Activated CD4-positive, alpha-beta memory T cell treated with anti-CD3 and anti-CD28 coated beads for 36 hours (primary cell): ENCODE measurements at regions of chr2 and their contacts with region 1.

Region 1: DNA sequence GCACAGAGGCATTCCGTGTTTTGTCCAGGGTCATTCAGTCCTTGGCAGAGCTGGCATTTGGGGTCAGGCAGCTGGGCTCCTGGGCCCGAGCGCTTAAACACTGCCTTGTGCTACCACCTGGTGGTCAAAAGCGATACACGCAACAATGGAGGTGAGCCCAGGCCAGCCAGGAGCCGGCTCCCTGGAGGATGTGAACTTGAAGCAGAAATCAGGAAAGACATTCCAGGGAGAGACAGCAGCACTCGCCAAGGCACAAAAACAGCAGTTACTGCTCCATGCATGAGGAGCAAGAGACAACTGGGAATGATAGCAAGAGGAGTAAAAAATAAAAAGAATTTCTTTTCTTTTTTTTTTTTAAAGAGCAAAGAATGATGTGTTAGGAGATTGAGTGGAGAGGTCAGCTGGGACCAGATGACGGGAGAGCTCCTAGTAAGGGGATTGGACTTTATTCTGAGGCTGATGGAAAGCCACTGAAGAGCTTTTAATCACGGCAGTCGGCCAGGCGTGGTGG is 20.7 kb downstream of the SCYGR8 start:
- DNase-seq: peak; percentile 72
- H3K4me3 Mint-ChIP-seq: no peak overlapping the region
- H3K27ac Mint-ChIP-seq: no peak overlapping the region
- H3K4me1 Mint-ChIP-seq: no peaks in the 10 kb centered on the region
- H3K27me3 Mint-ChIP-seq: no peaks in the 10 kb centered on the region

Region 2: GRCh38 chr2:227132986-227133385 is 633.4 kb before region 1 on chr2:
- CTCF ChIA-PET with region 1: interaction called, 12 read pairs
- POLR2A ChIA-PET with region 1: no interaction called
- intact Hi-C with region 1: loop called (anchors 2 kb)
- DNase-seq: no peak
- H3K4me3 Mint-ChIP-seq: no peak overlapping the region
- H3K27ac Mint-ChIP-seq: no peak overlapping the region
- H3K4me1 Mint-ChIP-seq: no peaks in the 10 kb centered on the region
- H3K27me3 Mint-ChIP-seq: peaks cover 5% of the 10 kb centered on the region

Region 3: GRCh38 chr2:227406177-227407031 is 360.0 kb before region 1 on chr2:
- CTCF ChIA-PET with region 1: interaction called, 25 read pairs
- POLR2A ChIA-PET with region 1: no interaction called
- intact Hi-C with region 1: loop called (anchors 1 kb)
- DNase-seq: no peak
- H3K4me3 Mint-ChIP-seq: no peak overlapping the region
- H3K27ac Mint-ChIP-seq: no peak overlapping the region
- H3K4me1 Mint-ChIP-seq: peaks cover 34% of the 10 kb centered on the region
- H3K27me3 Mint-ChIP-seq: no peaks in the 10 kb centered on the region

Region 4: GRCh38 chr2:227655454-227655853 is 111.0 kb before region 1 on chr2:
- CTCF ChIA-PET with region 1: interaction called, 82 read pairs
- POLR2A ChIA-PET with region 1: no interaction called
- intact Hi-C with region 1: loop called (anchors 1 kb)
- DNase-seq: no peak
- H3K4me3 Mint-ChIP-seq: no peak overlapping the region
- H3K27ac Mint-ChIP-seq: no peak overlapping the region
- H3K4me1 Mint-ChIP-seq: peaks cover 2% of the 10 kb centered on the region
- H3K27me3 Mint-ChIP-seq: peaks cover 2% of the 10 kb centered on the region

Region 5: DNA sequence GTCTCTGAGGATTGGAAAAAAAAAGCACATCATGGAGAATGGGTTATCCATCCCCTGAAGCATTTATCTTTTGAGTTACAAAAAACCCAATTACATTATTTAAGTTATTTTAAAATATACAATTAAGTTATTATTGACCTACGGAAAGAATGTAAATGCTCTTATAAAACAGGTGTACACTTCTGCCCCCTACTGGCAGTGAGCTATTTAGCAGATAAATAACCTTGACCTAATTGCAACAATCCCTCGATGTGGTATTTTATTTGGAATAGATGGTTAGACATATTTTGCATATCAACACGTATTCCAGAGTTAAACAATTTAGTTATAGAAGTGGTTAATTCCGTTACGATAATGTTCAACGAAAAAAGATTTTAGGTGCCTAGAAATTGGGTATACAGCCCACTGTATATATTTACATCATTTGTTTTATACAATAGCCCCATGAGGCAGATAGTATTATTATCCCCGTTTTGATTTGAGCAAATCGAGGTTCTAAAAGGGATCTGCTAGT is 95.9 kb after region 1 on chr2:
- CTCF ChIA-PET with region 1: interaction called, 18 read pairs
- POLR2A ChIA-PET with region 1: no interaction called
- intact Hi-C with region 1: no loop called
- DNase-seq: no peak
- H3K4me3 Mint-ChIP-seq: no peak overlapping the region
- H3K27ac Mint-ChIP-seq: no peak overlapping the region
- H3K4me1 Mint-ChIP-seq: no peaks in the 10 kb centered on the region
- H3K27me3 Mint-ChIP-seq: no peaks in the 10 kb centered on the region